HEK293T (cell line): ENCODE measurements at regions of chr9 and their contacts with region 1.

Region 1: DNA sequence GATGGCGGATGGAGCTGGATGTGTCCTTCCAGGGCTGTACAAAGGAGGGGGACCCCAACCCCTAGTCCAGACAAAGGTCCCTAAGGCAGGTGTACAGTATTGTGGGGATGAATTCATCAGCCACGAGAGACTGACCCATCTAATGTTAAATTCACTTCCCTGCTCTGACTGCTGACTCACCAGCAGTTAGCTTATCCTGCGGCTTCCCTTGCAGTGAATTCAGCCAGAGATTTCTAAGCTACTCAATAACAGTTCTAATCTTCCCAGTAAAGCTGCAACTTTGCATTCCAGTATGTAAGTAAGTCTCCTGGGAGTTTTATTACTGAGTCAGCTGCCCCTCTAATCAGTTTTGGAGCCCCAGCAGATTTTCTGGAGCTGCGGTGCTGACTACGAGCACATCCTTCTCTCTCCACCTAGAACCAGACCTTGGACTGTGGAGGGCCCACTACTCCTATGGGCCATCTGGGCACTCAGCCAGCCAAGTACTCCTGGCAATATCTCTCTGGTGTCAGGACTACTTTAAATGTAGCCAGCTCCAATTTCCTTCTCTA is 16.1 kb downstream of the B4GALT1 start:
- DNase-seq: peak; percentile 51

Region 2: GRCh38 chr9:33092634-33093033 is 58.4 kb before region 1 on chr9:
- CTCF ChIA-PET with region 1: no interaction called
- POLR2A ChIA-PET with region 1: no interaction called
- DNase-seq: no peak

Region 3: GRCh38 chr9:33167046-33167808 is 16.1 kb after region 1 on chr9 and contains the start of gene B4GALT1:
- CTCF ChIA-PET with region 1: interaction called, 3 read pairs
- POLR2A ChIA-PET with region 1: interaction called, 14 read pairs
- DNase-seq: peak; percentile 90